ENCODE measurements at regions of chr4 and their contacts with region 1.

Region 1: DNA sequence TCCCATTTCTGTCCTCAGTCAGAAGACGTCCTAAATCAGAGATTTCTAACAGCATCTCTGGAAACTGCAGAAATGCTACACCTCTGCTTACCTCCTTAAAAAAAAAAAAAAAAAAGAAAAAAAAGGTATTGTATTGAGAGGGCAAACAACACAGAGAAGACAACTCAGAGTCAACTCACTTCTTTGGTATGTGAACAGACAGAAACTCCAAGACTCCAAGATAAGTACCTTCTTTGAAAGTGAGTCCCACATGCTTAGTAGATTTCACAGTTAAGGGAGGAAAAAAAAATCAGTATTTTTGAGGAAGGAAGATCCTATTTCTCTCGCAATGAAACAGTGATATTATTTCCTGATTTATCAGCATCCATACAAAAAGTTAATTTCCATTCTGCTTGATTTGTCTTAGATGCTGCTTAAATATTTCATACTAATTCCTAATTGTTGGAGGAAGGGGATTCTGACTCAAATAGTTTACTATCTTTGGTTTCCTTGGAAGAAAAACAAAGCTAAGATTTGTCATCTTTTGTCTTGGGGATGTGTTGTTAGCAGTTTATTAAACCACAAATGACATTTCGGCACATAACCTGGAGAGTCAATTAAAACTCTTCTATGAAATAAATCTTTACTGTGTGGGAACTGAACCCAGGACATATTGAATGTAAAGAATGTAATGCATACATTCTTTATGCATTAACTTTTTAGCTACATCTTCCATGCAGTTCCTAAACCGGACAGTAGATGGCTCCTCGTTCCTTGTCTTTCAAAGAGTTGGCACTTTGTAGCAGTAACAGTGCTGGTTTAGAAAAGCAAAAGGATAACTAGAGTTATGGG is 4.7 kb downstream of the RASGEF1B start:
- DNase-seq: peak; percentile 31
- H3K27ac ChIP-seq: no peak overlapping the region
- CTCF ChIP-seq: peak; percentile 88

Region 2: DNA sequence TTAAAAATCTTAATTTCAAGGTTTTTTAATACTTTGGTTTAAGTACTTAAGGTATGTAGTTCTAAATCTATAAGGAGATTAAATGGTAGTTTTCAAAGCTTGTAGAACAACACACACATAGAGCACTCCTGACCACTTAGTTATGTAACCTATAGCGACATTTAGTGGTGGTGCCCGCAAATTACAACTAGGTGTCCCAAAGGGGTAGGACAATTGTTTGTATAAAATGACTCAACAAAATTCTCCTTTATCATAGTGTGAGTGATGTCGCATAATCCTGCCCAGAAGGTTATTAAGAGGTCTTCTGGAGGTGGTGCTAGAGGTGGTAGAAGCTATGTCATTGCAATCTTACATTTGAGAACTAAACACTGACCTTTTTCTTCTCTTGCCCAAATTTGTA is 377.7 kb after region 1 on chr4:
- CTCF ChIA-PET with region 1: interaction called, 12 read pairs
- POLR2A ChIA-PET with region 1: no interaction called
- DNase-seq: peak; percentile 63
- H3K27ac ChIP-seq: no peak overlapping the region
- CTCF ChIP-seq: peak; percentile 63

Region 3: DNA sequence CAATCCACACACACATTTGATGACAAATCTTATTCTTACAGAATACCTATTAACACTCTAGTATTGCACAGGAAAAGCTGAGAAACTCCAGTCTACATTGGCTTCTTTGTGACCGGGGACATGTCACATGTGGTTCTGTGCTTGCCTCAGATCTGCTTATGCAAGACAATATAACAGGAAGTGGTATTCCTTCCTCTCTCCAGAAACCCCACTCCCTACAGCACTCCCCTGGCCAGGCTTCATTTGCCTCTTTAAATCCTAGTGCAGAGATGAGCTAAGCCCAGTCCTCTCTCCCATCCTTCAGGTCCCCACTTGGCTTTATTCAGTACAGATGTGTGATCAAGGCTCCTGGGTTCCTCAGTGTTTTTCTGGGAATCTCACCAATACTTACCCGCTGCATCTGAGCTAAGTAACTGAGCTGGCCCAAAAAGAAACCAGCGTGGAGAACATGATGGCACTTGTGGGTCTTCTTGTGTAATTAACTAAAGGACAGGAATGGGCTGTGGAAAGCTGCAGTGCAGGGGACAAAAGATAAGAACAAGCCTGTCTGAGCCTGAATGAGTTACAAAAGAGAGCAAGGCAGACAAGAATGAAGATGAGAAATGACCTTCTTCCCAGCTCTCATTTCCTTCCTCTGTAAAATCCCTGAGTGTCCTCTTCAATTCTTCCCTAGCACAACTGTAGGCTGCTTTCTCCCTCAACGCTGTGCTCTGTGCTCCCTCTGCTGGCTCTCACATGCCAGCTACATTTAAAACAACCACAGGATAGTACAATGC is 801.2 kb after region 1 on chr4:
- CTCF ChIA-PET with region 1: interaction called, 12 read pairs
- POLR2A ChIA-PET with region 1: no interaction called
- DNase-seq: peak; percentile 66
- H3K27ac ChIP-seq: no peak overlapping the region
- CTCF ChIP-seq: peak; percentile 89